ENCODE measurements at regions of chr5 and their contacts with region 1.

Region 1: GRCh38 chr5:78964887-78965286 is 20.2 kb downstream of the ARSB start:
- DNase-seq: peak; percentile 45
- H3K4me3 ChIP-seq: no peak overlapping the region
- H3K27ac ChIP-seq: no peak overlapping the region
- H3K4me1 ChIP-seq: no peaks in the 10 kb centered on the region
- H3K27me3 ChIP-seq: no peaks in the 10 kb centered on the region
- CTCF ChIP-seq: peak; percentile 18 to 61

Region 2: GRCh38 chr5:78308703-78309102 is 656.2 kb before region 1 on chr5:
- CTCF ChIA-PET with region 1: no interaction called
- dilution Hi-C with region 1: no loop called
- in situ Hi-C with region 1: no loop called
- intact Hi-C with region 1: loop called (anchors 5 kb)
- DNase-seq: no peak
- H3K4me3 ChIP-seq: no peak overlapping the region
- H3K27ac ChIP-seq: no peak overlapping the region
- H3K4me1 ChIP-seq: no peaks in the 10 kb centered on the region
- H3K27me3 ChIP-seq: no peaks in the 10 kb centered on the region
- CTCF ChIP-seq: no peak

Region 3: DNA sequence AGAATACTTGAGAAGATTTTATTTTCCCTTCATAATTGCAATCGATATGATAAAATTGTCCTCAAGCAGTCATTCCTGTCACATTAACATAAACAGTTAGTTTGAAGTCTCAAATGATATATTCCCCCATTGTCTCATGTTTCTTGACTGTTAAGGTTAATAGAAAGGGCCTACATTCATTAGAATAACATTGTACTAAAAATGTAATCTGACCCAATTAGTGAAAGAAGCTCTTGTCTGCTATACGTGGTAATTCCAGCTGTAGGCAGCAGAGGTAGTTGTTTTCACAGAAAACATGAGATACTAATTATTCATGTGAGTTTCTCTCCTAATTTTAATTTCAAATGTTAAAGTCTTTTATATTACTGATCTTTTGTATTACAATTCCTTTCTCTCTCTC is 644.5 kb before region 1 on chr5:
- CTCF ChIA-PET with region 1: no interaction called
- dilution Hi-C with region 1: no loop called
- in situ Hi-C with region 1: no loop called
- intact Hi-C with region 1: loop called (anchors 1 kb)
- DNase-seq: peak; percentile 29
- H3K4me3 ChIP-seq: no peak overlapping the region
- H3K27ac ChIP-seq: no peak overlapping the region
- H3K4me1 ChIP-seq: no peaks in the 10 kb centered on the region
- H3K27me3 ChIP-seq: no peaks in the 10 kb centered on the region
- CTCF ChIP-seq: peak; percentile 72 to 75

Region 4: DNA sequence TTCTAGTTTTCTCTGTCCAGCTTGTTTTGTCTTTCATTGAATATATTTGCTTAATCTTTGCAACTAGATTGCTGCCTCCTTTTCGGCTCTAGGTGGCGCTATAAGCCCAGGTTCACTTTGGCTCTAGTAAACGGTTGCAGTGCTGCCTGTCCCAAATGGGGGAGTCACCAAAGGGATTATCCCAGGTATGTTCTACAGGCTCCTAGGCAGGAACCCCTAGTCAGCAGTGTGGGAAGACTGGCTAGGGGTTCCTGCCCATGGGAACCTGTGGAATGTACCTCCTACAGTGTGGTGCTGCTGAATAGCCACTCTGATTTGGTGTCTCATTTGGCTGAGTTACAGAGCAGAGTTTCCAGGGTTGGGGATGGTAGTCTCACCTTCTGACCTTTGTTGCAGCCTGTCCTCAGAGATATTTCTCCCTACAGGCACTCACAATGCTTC is 64.9 kb before region 1 on chr5:
- CTCF ChIA-PET with region 1: interaction called, 5 read pairs
- dilution Hi-C with region 1: no loop called
- in situ Hi-C with region 1: loop called in 1 of 2 experiments (anchors 10 kb)
- intact Hi-C with region 1: loop called (anchors 1 kb)
- DNase-seq: peak; percentile 44
- H3K4me3 ChIP-seq: no peak overlapping the region
- H3K27ac ChIP-seq: no peak overlapping the region
- H3K4me1 ChIP-seq: no peaks in the 10 kb centered on the region
- H3K27me3 ChIP-seq: no peaks in the 10 kb centered on the region
- CTCF ChIP-seq: peak; percentile 79 to 83